Activated CD4-positive, alpha-beta T cell treated with anti-CD3 and anti-CD28 coated beads, Interleukin-2, amount 10 ng/mL, durations not matched to agents 24 days and 14 days (primary cell): ENCODE measurements at regions of chr5 and their contacts with region 1.

Region 1: DNA sequence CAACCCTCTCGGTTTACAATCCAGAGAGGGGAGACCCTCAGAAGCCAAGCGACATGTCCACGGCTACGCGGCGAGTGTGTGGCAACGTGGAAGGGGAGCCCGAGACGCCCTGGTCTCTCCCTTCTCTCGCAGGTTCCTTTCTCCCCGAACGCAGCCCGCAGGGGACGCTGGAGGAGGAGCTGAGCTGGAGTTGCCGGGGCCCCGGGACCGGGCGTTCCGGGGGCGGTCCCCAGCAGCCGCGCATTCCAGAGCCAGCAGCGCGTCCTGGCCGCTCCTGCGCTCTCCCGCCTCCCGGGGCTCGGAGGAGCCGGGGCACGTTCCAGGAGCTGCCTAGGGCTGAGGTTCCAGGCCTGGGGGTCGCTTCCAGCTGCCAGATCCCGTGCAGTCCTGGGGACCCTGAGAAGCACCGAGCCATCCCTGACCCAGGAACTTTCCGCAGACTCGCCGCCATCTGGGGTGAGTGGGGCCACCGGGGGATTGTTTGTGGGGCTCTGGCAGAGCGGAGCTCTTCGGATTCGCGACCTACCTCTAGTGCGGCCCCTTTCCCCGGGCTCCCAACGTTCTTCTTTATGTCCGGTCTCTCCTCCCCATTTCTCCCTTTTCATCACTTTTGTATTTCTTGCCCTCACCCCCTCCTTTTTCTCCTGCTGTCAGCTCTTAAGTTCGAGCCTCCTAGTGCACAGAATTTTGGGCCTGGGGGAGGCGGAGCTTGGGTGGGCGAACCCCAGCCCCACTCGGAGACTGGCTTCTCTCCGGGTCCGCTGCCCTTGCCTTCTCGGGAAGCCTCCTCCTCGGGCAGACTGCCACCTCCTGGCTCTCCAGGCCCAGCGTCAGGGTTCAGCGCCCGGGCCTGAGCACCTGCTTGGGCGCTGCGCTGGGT is at the start of gene SMIM3:
- DNase-seq: peak; percentile 91
- H3K4me3 Mint-ChIP-seq: peak within 1 kb of the TSS; percentile 100
- H3K27ac Mint-ChIP-seq: peak within 1 kb of the TSS; percentile 97
- H3K4me1 Mint-ChIP-seq: peaks cover 56% of the 10 kb centered on the region
- H3K27me3 Mint-ChIP-seq: no peaks in the 10 kb centered on the region
- total RNA-seq, gene SMIM3: 13.8 and 16.6 TPM in 2 replicates

Region 2: GRCh38 chr5:150458819-150459557 is 319.8 kb before region 1 on chr5:
- intact Hi-C with region 1: loop called (anchors 5 kb)
- DNase-seq: peak; percentile 96
- H3K4me3 Mint-ChIP-seq: peak overlapping the region; percentile 44
- H3K27ac Mint-ChIP-seq: peak overlapping the region; percentile 10
- H3K4me1 Mint-ChIP-seq: peaks cover 27% of the 10 kb centered on the region
- H3K27me3 Mint-ChIP-seq: no peaks in the 10 kb centered on the region

Region 3: GRCh38 chr5:150560401-150561193 is 218.2 kb before region 1 on chr5:
- intact Hi-C with region 1: loop called (anchors 2 kb)
- DNase-seq: peak; percentile 95
- H3K4me3 Mint-ChIP-seq: no peak overlapping the region
- H3K27ac Mint-ChIP-seq: no peak overlapping the region
- H3K4me1 Mint-ChIP-seq: no peaks in the 10 kb centered on the region
- H3K27me3 Mint-ChIP-seq: peaks cover 5% of the 10 kb centered on the region

Region 4: GRCh38 chr5:150700594-150701293 is 78.0 kb before region 1 on chr5 and contains the start of gene RBM22:
- intact Hi-C with region 1: loop called (anchors 1 kb)
- DNase-seq: peak; percentile 98
- H3K4me3 Mint-ChIP-seq: peak within 1 kb of the TSS; percentile 53
- H3K27ac Mint-ChIP-seq: no peak within 1 kb of the TSS
- H3K4me1 Mint-ChIP-seq: peaks cover 12% of the 10 kb centered on the region
- H3K27me3 Mint-ChIP-seq: no peaks in the 10 kb centered on the region
- total RNA-seq, gene RBM22: 69.6 and 78.4 TPM in 2 replicates

Region 5: GRCh38 chr5:150758531-150759333 is 20.0 kb before region 1 on chr5 and contains the start of gene DCTN4:
- intact Hi-C with region 1: loop called (anchors 1 kb)
- DNase-seq: peak; percentile 97
- H3K4me3 Mint-ChIP-seq: no peak within 1 kb of the TSS
- H3K27ac Mint-ChIP-seq: no peak within 1 kb of the TSS
- H3K4me1 Mint-ChIP-seq: peaks cover 28% of the 10 kb centered on the region
- H3K27me3 Mint-ChIP-seq: no peaks in the 10 kb centered on the region
- total RNA-seq, gene DCTN4: 43.9 and 44.8 TPM in 2 replicates

Region 6: DNA sequence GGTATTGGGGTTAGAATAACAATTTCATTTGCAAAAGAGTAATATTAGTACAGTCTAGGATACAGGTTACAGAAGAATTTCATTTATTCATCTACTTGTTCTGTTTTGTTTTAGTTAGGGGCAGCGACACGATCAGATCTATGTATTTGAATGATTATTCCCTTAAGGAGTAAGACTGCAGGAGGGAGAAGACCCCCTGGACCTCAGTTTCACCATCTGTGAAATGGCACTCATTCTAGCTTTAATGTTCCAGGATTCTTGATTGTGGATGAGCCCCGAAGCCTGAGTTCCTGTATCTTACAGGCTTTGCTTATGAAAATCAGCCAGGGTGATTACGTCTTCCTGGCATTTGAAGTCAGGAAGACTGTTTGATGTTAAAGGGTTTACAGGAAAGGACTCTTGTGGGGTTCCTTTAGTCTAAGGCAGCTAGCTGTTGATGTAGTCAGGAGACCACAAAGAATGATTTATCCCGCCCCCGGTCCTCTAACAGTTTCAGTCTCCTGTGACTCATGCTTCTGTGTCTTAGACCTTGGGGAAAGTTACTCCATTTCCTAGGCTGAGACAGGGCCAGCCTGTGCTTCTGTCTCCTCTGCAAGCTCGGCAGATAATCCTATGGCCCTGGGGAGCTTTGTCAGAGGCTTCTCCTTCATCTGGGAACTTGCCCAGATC is 11.3 kb after region 1 on chr5:
- intact Hi-C with region 1: loop called (anchors 1 kb)
- DNase-seq: peak; percentile 89
- H3K4me3 Mint-ChIP-seq: peak overlapping the region; percentile 82
- H3K27ac Mint-ChIP-seq: peak overlapping the region; percentile 84
- H3K4me1 Mint-ChIP-seq: peaks cover 55% of the 10 kb centered on the region
- H3K27me3 Mint-ChIP-seq: no peaks in the 10 kb centered on the region

Region 7: DNA sequence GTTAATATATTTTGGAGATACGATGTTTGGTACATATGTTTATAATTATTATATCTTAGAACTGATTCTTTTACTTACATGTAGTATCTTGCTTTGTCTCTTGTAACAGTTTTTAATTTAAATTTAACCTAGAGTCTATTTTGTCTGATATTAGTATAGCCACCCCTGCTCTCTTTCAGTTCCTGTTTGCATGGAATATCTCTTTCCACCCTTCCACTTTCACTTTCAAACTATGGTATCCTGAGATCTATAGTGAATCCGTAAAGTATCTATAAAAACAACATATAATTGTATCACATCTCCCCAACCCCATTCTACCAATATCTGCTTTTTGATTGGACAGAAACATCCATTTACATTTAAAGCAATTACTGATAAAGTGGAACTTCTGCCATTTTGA is 74.8 kb after region 1 on chr5:
- intact Hi-C with region 1: no loop called
- DNase-seq: no peak
- H3K4me3 Mint-ChIP-seq: no peak overlapping the region
- H3K27ac Mint-ChIP-seq: no peak overlapping the region
- H3K4me1 Mint-ChIP-seq: peaks cover 10% of the 10 kb centered on the region
- H3K27me3 Mint-ChIP-seq: peaks cover 2% of the 10 kb centered on the region

Region 8: GRCh38 chr5:151150471-151151262 is 371.9 kb after region 1 on chr5:
- intact Hi-C with region 1: loop called (anchors 2 kb)
- DNase-seq: peak; percentile 93
- H3K4me3 Mint-ChIP-seq: peak overlapping the region; percentile 66
- H3K27ac Mint-ChIP-seq: peak overlapping the region; percentile 88
- H3K4me1 Mint-ChIP-seq: peaks cover 81% of the 10 kb centered on the region
- H3K27me3 Mint-ChIP-seq: no peaks in the 10 kb centered on the region